ENCODE measurements at regions of chr3 and their contacts with region 1.

Region 1: DNA sequence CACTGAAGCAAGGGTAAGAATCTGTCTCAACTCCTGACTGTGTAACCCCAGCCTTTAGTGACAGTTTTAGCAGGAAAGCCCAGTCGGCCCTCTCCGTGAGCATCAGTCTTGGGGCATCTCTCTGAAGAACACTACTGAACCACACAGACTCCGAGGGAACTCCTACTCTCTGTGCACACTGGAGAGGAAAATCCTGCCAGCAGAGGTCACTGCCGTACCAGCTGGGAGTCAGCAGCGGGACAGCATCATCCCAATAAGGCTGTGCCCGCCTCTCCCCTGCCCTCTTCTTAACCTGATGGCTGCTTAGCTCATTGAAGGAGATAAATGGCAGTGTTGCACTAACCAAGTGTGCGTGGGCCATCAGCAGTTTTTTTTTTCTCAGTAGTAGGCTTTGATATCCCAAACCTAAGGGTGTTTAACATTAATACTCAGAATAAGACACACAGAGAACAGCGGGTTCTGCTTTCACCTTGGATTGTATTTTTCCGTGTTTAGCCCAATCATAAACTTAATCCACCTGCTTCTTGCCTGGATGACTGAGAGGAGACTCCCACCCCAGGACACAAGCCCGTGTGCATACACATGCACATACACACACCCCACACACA is 26.6 kb upstream of the RASA2 start:
- DNase-seq: peak; percentile 96
- H3K4me3 Mint-ChIP-seq: no peak overlapping the region
- H3K27ac Mint-ChIP-seq: no peak overlapping the region
- H3K4me1 Mint-ChIP-seq: peaks cover 6% of the 10 kb centered on the region
- H3K27me3 Mint-ChIP-seq: no peaks in the 10 kb centered on the region

Region 2: GRCh38 chr3:140416666-140417065 is 1043.5 kb before region 1 on chr3:
- CTCF ChIA-PET with region 1: no interaction called
- intact Hi-C with region 1: no loop called
- DNase-seq: no peak
- H3K4me3 Mint-ChIP-seq: no peak overlapping the region
- H3K27ac Mint-ChIP-seq: no peak overlapping the region
- H3K4me1 Mint-ChIP-seq: no peaks in the 10 kb centered on the region
- H3K27me3 Mint-ChIP-seq: no peaks in the 10 kb centered on the region

Region 3: GRCh38 chr3:141360888-141361598 is 99.2 kb before region 1 on chr3:
- CTCF ChIA-PET with region 1: interaction called, 87 read pairs
- intact Hi-C with region 1: no loop called
- DNase-seq: no peak
- H3K4me3 Mint-ChIP-seq: no peak overlapping the region
- H3K27ac Mint-ChIP-seq: no peak overlapping the region
- H3K4me1 Mint-ChIP-seq: peaks cover 8% of the 10 kb centered on the region
- H3K27me3 Mint-ChIP-seq: no peaks in the 10 kb centered on the region

Region 4: DNA sequence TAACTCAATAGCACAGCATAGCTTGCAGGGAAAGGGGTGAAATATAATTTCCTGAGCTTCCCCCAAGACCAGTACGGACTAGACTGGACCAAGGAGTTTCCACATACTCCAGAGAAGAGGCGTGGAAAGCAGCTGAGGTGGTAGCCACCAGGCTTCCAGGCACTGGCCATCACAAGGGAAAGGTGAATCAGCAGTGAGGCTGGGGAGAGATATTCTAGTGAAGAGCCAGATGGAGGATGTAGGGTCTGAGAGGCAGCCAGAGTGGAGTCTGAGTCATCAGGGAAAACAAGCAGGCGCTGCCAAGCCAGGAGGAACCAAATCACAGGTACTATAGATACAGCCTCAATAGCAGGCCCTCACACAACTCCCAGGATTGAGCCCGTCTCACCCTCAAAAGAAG is 17.0 kb after region 1 on chr3:
- CTCF ChIA-PET with region 1: interaction called, 33 read pairs
- intact Hi-C with region 1: loop called (anchors 2 kb)
- DNase-seq: no peak
- H3K4me3 Mint-ChIP-seq: no peak overlapping the region
- H3K27ac Mint-ChIP-seq: no peak overlapping the region
- H3K4me1 Mint-ChIP-seq: peaks cover 17% of the 10 kb centered on the region
- H3K27me3 Mint-ChIP-seq: no peaks in the 10 kb centered on the region

Region 5: GRCh38 chr3:141644931-141645330 is 184.7 kb after region 1 on chr3:
- CTCF ChIA-PET with region 1: interaction called, 48 read pairs
- intact Hi-C with region 1: loop called (anchors 1 kb)
- DNase-seq: peak; percentile 86
- H3K4me3 Mint-ChIP-seq: no peak overlapping the region
- H3K27ac Mint-ChIP-seq: no peak overlapping the region
- H3K4me1 Mint-ChIP-seq: peaks cover 3% of the 10 kb centered on the region
- H3K27me3 Mint-ChIP-seq: no peaks in the 10 kb centered on the region

Region 6: GRCh38 chr3:141663993-141664392 is 203.8 kb after region 1 on chr3:
- CTCF ChIA-PET with region 1: no interaction called
- intact Hi-C with region 1: no loop called
- DNase-seq: no peak
- H3K4me3 Mint-ChIP-seq: no peak overlapping the region
- H3K27ac Mint-ChIP-seq: no peak overlapping the region
- H3K4me1 Mint-ChIP-seq: peaks cover 6% of the 10 kb centered on the region
- H3K27me3 Mint-ChIP-seq: peaks cover 32% of the 10 kb centered on the region

Region 7: GRCh38 chr3:142279965-142280590 is 819.9 kb after region 1 on chr3:
- CTCF ChIA-PET with region 1: no interaction called
- intact Hi-C with region 1: loop called (anchors 1 kb)
- DNase-seq: peak; percentile 54
- H3K4me3 Mint-ChIP-seq: no peak overlapping the region
- H3K27ac Mint-ChIP-seq: no peak overlapping the region
- H3K4me1 Mint-ChIP-seq: peaks cover 2% of the 10 kb centered on the region
- H3K27me3 Mint-ChIP-seq: no peaks in the 10 kb centered on the region

Measured in activated naive CD4-positive, alpha-beta T cell treated with anti-CD3 and anti-CD28 coated beads for 36 hours (primary cell).